OCI-LY7 (cell line): ENCODE measurements at regions of chr17 and their contacts with region 1.

Region 1: DNA sequence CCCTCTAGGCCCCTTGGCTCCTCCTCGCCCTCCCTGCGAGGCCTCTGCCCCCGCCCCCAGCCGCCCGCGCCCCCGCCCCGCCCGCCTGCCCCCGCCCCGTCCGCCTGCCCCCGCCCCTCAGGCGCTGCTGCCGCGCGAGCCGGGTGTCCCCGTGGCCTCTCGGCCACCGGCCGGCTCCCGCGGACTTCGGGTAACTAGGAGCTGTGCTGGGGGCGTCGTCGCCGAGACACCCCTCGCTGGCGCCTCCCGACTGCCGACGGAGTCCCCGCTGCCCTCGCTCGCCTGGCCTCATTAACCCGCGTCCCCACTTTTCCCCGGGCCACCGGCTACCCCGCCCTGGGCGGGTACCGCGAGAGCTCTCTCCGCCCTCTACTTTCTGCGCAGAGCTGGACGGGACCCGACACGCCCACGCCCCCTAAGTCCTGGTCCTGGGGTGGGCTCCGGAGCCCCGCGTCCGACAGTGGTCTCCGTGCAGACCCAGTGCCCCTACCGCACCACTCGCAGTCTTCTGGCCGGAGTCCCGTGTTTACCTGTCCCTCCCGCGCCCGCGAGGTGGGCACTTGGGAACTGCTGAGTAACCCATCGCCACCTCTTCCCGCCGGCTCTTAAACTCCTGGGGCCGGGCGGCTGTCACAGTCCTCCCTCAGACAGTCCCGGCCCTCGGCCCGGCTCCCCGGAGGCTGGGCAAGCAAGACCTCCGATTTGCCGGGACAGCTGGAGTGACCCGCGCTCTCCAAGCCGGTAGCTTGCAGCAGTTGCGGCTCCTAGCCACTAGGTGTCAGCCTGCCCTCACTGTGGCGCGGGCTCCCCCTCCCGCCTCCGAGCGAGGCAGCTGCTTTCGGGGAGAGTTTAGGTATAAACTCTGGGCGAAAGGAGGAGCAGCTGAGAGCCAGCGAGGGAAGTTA is at the start of gene TLCD1:
- DNase-seq: peak; percentile 95
- H3K4me3 ChIP-seq: peak within 1 kb of the TSS; percentile 69
- H3K27ac ChIP-seq: peak within 1 kb of the TSS; percentile 94
- H3K4me1 ChIP-seq: peaks cover 76% of the 10 kb centered on the region
- CTCF ChIP-seq: peak; percentile 99
- total RNA-seq, gene TLCD1: 0.28 and 1.6 TPM in 2 replicates

Region 2: DNA sequence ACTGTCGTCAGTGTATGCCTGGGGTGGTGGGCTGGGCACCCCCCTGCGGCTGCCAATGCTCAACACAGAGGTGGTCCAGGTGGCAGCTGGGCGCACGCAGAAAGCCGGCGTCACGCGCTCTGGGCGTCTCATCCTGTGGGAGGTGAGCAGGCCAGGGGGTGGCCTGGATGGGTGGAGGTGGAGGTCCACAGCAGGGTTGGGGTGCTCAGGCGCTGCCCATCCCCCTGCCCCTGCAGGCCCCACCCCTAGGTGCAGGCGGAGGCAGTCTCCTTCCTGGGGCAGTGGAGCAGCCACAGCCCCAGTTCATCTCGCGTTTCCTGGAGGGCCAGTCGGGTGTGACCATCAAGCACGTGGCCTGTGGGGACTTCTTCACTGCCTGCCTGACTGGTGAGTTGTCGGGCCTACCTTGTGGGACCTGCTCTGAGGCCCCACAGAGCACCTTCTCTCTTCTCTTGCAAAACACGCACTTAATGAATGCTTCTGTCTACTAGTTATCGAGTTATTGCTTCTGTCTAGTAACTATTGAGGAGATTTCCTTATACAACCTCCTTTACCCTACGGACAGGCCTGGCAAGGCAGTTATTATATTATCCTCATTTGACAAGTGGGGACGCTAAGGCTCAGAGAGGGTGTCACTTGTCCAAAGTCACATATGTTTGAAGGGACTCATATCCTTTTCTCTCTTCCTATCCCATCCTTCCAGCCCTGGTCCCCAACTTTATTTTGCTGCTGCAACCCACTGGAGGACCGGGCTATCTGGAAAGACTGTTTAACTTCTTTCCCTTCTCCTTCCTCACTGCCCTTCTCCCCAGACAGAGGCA is 11.6 kb after region 1 on chr17:
- CTCF ChIA-PET with region 1: interaction called, 11 read pairs
- POLR2A ChIA-PET with region 1: interaction called, 56 read pairs
- intact Hi-C with region 1: loop called (anchors 1 kb)
- DNase-seq: peak; percentile 96
- H3K4me3 ChIP-seq: peak overlapping the region; percentile 60
- H3K27ac ChIP-seq: peak overlapping the region; percentile 95
- H3K4me1 ChIP-seq: peaks cover 68% of the 10 kb centered on the region
- CTCF ChIP-seq: no peak

Region 3: GRCh38 chr17:28750178-28751047 is 23.9 kb after region 1 on chr17:
- CTCF ChIA-PET with region 1: interaction called, 27 read pairs
- POLR2A ChIA-PET with region 1: interaction called, 16 read pairs
- intact Hi-C with region 1: loop called (anchors 1 kb)
- DNase-seq: peak; percentile 93
- H3K4me3 ChIP-seq: no peak overlapping the region
- H3K27ac ChIP-seq: no peak overlapping the region
- H3K4me1 ChIP-seq: peaks cover 33% of the 10 kb centered on the region
- CTCF ChIP-seq: peak; percentile 99

Region 4: GRCh38 chr17:28854457-28855350 is 128.2 kb after region 1 on chr17 and contains the start of gene ERAL1:
- CTCF ChIA-PET with region 1: no interaction called
- POLR2A ChIA-PET with region 1: interaction called, 4 read pairs
- intact Hi-C with region 1: loop called (anchors 5 kb)
- DNase-seq: peak; percentile 88
- H3K4me3 ChIP-seq: peak within 1 kb of the TSS; percentile 94
- H3K27ac ChIP-seq: peak within 1 kb of the TSS; percentile 39
- H3K4me1 ChIP-seq: peaks cover 15% of the 10 kb centered on the region
- CTCF ChIP-seq: peak; percentile 25; the same call in 1 of the 2 replicates
- total RNA-seq, gene ERAL1: 25.0 and 30.8 TPM in 2 replicates

Region 5: DNA sequence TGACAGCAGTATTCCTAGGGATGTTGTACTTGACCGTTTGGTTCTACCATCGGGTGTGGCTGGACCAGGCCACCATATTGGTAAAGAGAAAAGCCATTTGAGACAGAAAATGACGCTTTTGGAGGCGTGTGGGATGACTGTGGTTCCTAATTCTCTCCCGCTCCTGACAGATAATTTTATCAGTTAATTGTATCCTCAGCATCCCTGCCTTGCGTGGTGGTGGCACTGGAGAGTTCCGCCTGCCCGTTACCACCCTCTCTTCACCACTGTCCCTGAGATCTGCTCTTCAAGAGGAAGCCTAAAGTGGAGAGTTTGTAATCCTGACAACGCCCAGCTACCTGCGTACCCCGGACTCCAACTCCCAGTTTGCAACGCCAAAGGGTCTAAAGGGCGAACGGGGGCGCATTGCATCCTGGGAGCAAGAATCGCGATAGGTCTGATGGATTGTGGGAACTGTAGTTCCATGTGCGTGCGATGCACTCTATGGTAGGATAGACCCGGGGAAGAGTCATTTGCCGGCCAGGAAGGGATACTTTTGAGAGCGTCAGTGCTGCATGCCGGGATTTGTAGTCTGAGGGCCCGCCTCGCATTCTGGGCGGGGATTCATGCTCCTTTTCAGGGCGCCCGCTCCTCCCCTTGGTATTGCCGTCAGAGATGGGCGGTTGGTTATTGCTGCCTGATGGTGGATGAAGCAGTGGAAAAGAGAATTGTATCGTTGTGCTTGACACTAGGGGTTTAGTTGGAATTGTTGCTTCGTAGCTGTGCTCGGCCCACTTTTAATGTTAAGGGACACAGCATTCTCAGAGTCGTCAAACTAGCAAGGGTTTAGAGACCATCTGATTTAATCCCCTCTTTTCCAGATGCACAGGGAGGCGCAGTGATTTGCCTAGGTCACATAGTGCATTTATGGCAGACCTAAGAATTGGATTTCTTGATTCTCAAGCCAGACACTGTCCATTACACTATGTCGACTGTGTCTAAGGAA is 225.8 kb after region 1 on chr17:
- CTCF ChIA-PET with region 1: interaction called, 3 read pairs
- POLR2A ChIA-PET with region 1: no interaction called
- intact Hi-C with region 1: loop called (anchors 1 kb)
- DNase-seq: peak; percentile 99
- H3K4me3 ChIP-seq: peak overlapping the region; percentile 80
- H3K27ac ChIP-seq: peak overlapping the region; percentile 89
- H3K4me1 ChIP-seq: peaks cover 24% of the 10 kb centered on the region
- CTCF ChIP-seq: no peak